ENCODE measurements at regions of chr11 and their contacts with region 1.

Region 1: DNA sequence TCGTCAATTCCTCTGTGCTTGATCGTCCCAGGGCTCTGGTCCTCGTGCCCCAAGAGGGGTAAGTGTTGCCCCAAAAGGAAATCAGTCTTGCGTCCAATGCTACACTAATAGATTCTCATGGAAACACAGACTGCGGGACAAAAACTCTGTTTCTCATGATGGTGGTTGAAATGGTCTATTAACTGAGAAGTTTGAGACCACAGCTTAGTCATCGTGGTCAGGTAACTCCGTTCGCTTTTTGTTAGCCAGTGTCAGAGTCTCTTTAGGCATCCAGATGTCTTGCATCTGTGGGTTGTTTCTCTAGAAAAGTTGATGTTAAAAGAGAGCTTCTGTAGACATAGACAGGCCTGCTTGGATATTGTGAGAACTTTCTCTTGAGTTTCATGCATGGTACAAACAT is 104.6 kb upstream of the SORL1-AS1 start:
- DNase-seq: peak; percentile 96
- ATAC-seq: peak; percentile 95
- H3K4me3 ChIP-seq: no peak overlapping the region
- H3K27ac ChIP-seq: peak overlapping the region; percentile 80
- H3K4me1 ChIP-seq: peaks cover 30% of the 10 kb centered on the region
- H3K27me3 ChIP-seq: no peaks in the 10 kb centered on the region
- CTCF ChIP-seq: no peak
- EP300 ChIP-seq: peak; percentile 41 to 67; a peak in 3 of 4 replicates
- POLR2A ChIP-seq: no peak
- RAD21 ChIP-seq: no peak

Region 2: GRCh38 chr11:121540627-121541026 is 16.7 kb before region 1 on chr11:
- CTCF ChIA-PET with region 1: interaction called, 4 read pairs
- POLR2A ChIA-PET with region 1: no interaction called
- RAD21 ChIA-PET with region 1: no interaction called
- SMC1A ChIA-PET with region 1: interaction called, 9 read pairs
- in situ Hi-C with region 1: no loop called
- intact Hi-C with region 1: loop called (anchors 1 kb)
- DNase-seq: peak; percentile 50
- ATAC-seq: peak; percentile 42
- H3K4me3 ChIP-seq: no peak overlapping the region
- H3K27ac ChIP-seq: peak overlapping the region; percentile 74; the same call in 1 of the 2 replicates
- H3K4me1 ChIP-seq: peaks cover 62% of the 10 kb centered on the region
- H3K27me3 ChIP-seq: no peaks in the 10 kb centered on the region
- CTCF ChIP-seq: no peak
- EP300 ChIP-seq: no peak
- POLR2A ChIP-seq: no peak
- RAD21 ChIP-seq: no peak

Region 3: GRCh38 chr11:121575250-121575962 is 18.1 kb after region 1 on chr11:
- CTCF ChIA-PET with region 1: interaction called, 7 read pairs
- POLR2A ChIA-PET with region 1: no interaction called
- RAD21 ChIA-PET with region 1: interaction called, 6 read pairs
- SMC1A ChIA-PET with region 1: interaction called, 11 read pairs
- in situ Hi-C with region 1: no loop called
- intact Hi-C with region 1: loop called (anchors 1 kb)
- DNase-seq: peak; percentile 74
- ATAC-seq: peak; percentile 93
- H3K4me3 ChIP-seq: no peak overlapping the region
- H3K27ac ChIP-seq: peak overlapping the region; percentile 75
- H3K4me1 ChIP-seq: peaks cover 56% of the 10 kb centered on the region
- H3K27me3 ChIP-seq: no peaks in the 10 kb centered on the region
- CTCF ChIP-seq: no peak
- EP300 ChIP-seq: peak; percentile 86 to 91
- POLR2A ChIP-seq: no peak; the same call in 1 of the 2 replicates
- RAD21 ChIP-seq: no peak

Measured in GM12878 (cell line).